ENCODE measurements at regions of chr5 and their contacts with region 1.

Region 1: GRCh38 chr5:96026406-96027041 is 64.9 kb upstream of the ELL2 start:
- DNase-seq: no peak
- ATAC-seq: no peak
- H3K4me3 Mint-ChIP-seq: no peak overlapping the region
- H3K27ac Mint-ChIP-seq: no peak overlapping the region
- H3K4me1 Mint-ChIP-seq: no peaks in the 10 kb centered on the region
- H3K27me3 Mint-ChIP-seq: peaks cover 5% of the 10 kb centered on the region

Region 2: DNA sequence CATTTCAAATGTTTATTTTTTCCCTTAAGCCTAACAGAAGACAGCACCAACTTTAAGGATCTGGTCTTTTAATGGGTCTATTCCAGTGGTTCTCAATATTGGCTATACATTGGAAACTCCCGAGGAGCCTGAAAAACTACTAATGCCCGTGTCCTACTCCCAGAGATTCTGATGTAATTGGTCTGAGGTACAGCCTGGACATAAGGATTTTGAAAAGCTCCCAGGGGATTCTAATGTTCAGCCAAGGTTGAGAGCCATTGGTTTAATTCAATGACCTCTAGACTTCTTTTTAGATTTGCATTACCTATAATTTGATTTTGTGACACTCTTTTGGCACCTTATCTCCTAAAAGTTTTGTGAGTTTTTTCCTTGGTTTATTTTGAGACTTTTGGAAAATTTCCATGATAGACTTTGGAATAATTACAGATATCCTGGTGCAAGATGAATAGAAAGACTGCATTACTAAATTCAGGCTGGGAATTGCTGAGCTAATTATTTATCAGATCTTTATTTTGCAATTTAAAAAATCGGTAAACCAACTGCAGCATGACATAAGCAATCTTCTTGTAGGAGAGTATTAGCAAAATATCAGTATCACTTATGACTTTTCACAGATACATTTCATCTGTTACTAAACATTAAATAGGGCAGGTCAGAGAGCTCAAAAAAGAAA is 26.7 kb after region 1 on chr5:
- CTCF ChIA-PET with region 1: no interaction called
- POLR2A ChIA-PET with region 1: no interaction called
- intact Hi-C with region 1: loop called in 1 of 2 experiments (anchors 2 kb)
- DNase-seq: no peak
- ATAC-seq: no peak
- H3K4me3 Mint-ChIP-seq: no peak overlapping the region
- H3K27ac Mint-ChIP-seq: no peak overlapping the region
- H3K4me1 Mint-ChIP-seq: peaks cover 13% of the 10 kb centered on the region
- H3K27me3 Mint-ChIP-seq: peaks cover 13% of the 10 kb centered on the region